Activated naive CD4-positive, alpha-beta T cell treated with anti-CD3 and anti-CD28 coated beads for 36 hours (primary cell): ENCODE measurements at regions of chr16 and their contacts with region 1.

Region 1: GRCh38 chr16:30657866-30658730 is at the start of gene FBRS:
- DNase-seq: peak; percentile 100
- H3K4me3 Mint-ChIP-seq: peak within 1 kb of the TSS; percentile 99
- H3K27ac Mint-ChIP-seq: peak within 1 kb of the TSS; percentile 100
- H3K4me1 Mint-ChIP-seq: peaks cover 42% of the 10 kb centered on the region
- H3K27me3 Mint-ChIP-seq: no peaks in the 10 kb centered on the region
- total RNA-seq, gene FBRS: 83.8 to 84.8 TPM

Region 2: GRCh38 chr16:30065143-30065850 is 592.8 kb before region 1 on chr16 and contains the start of gene ALDOA:
- CTCF ChIA-PET with region 1: no interaction called
- intact Hi-C with region 1: loop called (anchors 1 kb)
- DNase-seq: peak; percentile 97
- H3K4me3 Mint-ChIP-seq: peak within 1 kb of the TSS; percentile 95
- H3K27ac Mint-ChIP-seq: peak within 1 kb of the TSS; percentile 98
- H3K4me1 Mint-ChIP-seq: peaks cover 32% of the 10 kb centered on the region
- H3K27me3 Mint-ChIP-seq: no peaks in the 10 kb centered on the region
- total RNA-seq, gene ALDOA: 1,750 to 1,795 TPM

Region 3: GRCh38 chr16:30429678-30430427 is 228.2 kb before region 1 on chr16 and contains the start of gene DCTPP1:
- CTCF ChIA-PET with region 1: no interaction called
- intact Hi-C with region 1: loop called (anchors 1 kb)
- DNase-seq: peak; percentile 98
- H3K4me3 Mint-ChIP-seq: no peak within 1 kb of the TSS
- H3K27ac Mint-ChIP-seq: no peak within 1 kb of the TSS
- H3K4me1 Mint-ChIP-seq: peaks cover 39% of the 10 kb centered on the region
- H3K27me3 Mint-ChIP-seq: no peaks in the 10 kb centered on the region
- total RNA-seq, gene DCTPP1: 69.9 to 73.0 TPM

Region 4: DNA sequence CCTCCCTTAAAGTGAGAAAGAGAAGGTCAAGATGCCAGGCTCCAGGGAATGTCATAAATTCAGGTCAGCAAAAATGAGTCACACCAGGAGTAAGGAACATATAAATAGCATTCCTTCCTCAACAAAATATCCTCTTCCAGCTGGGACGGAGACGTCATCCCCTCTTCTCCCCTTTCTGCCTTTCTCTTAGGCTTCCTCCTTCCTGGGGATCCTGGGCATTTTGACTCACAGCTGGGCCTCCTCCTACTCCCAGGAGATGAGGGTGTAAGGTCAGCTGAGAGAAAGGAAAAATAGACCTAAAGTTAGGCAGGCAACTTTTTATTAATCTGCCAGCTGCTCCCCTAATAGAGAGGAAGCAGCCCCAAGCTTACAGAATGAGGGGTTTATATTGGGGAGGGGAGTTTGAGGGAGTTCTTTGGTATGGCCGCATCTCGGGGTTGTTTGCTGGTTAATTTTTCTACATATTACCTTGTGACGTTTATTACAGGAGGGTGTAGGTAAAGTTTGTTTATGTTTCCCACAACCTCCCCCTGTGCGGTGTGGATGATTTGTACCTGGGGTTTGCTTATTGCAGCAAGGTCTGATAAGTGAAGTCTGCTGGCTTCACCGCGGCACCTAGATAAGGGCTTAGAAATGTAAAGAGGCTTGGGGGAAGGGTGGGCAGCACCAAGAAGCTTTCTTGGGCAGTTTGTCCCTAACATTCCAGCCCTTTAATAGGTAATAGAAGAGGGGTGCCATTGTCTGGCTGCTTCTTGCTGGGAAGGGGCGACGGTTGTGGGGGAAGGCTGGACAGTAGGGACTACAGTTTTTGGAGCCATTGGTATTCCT is 116.4 kb before region 1 on chr16:
- CTCF ChIA-PET with region 1: no interaction called
- intact Hi-C with region 1: no loop called
- DNase-seq: no peak
- H3K4me3 Mint-ChIP-seq: no peak overlapping the region
- H3K27ac Mint-ChIP-seq: no peak overlapping the region
- H3K4me1 Mint-ChIP-seq: peaks cover 20% of the 10 kb centered on the region
- H3K27me3 Mint-ChIP-seq: no peaks in the 10 kb centered on the region

Region 5: GRCh38 chr16:30609926-30610839 is 47.9 kb before region 1 on chr16 and contains the start of gene ZNF689:
- CTCF ChIA-PET with region 1: interaction called, 3 read pairs
- intact Hi-C with region 1: loop called (anchors 1 kb)
- DNase-seq: peak; percentile 98
- H3K4me3 Mint-ChIP-seq: peak within 1 kb of the TSS; percentile 83
- H3K27ac Mint-ChIP-seq: peak within 1 kb of the TSS; percentile 96
- H3K4me1 Mint-ChIP-seq: peaks cover 20% of the 10 kb centered on the region
- H3K27me3 Mint-ChIP-seq: no peaks in the 10 kb centered on the region
- total RNA-seq, gene ZNF689: 10.7 to 11.5 TPM

Region 6: DNA sequence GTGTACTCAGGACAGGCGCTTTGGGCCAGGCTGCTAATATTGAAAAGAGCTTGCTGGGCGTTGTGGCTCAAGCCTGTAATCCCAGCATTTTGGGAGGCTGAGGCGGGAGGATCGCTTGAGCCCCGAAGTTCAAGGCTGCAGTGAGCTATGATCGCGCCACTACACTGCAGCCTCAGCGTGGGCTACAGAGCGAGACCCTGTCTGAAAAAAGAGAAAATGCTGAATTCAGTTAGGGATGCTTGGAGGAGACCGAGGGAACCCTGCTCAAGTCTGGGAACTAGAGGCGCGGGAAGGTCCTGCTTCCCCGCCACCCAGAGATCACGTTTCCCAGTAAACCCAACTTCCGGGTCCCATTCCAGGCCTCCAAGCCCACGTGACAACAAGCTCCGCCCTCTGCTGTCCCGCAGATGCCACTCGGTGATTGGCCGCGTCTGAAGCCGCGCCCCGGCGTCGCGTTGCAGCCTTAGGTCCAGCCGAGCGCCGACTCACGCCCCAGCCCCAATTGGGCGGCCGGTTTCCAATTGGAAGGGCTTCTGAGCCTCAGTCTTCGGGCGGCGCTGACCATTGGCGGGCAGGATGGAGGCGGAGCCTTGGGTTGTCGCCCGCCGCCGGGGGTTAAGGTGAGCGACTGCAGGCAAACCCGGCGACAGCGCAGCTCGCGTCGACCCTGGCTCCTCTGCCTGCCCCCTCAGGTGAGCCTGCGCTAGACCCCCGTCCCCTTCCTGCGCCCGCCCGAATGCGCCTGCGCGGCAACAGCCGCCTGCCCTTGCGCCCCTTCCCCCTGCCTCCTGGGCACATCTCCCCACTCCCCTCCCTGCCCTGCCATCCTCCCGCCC is 89.9 kb after region 1 on chr16 and contains the start of gene PHKG2:
- CTCF ChIA-PET with region 1: interaction called, 3 read pairs
- intact Hi-C with region 1: loop called (anchors 2 kb)
- DNase-seq: peak; percentile 99
- H3K4me3 Mint-ChIP-seq: peak within 1 kb of the TSS; percentile 89
- H3K27ac Mint-ChIP-seq: peak within 1 kb of the TSS; percentile 86
- H3K4me1 Mint-ChIP-seq: peaks cover 19% of the 10 kb centered on the region
- H3K27me3 Mint-ChIP-seq: no peaks in the 10 kb centered on the region
- total RNA-seq, gene PHKG2: 23.3 to 26.4 TPM

Region 7: GRCh38 chr16:31032736-31033708 is 374.9 kb after region 1 on chr16 and contains the start of gene STX4:
- CTCF ChIA-PET with region 1: no interaction called
- intact Hi-C with region 1: loop called (anchors 1 kb)
- DNase-seq: peak; percentile 99
- H3K4me3 Mint-ChIP-seq: peak within 1 kb of the TSS; percentile 96
- H3K27ac Mint-ChIP-seq: peak within 1 kb of the TSS; percentile 93
- H3K4me1 Mint-ChIP-seq: peaks cover 22% of the 10 kb centered on the region
- H3K27me3 Mint-ChIP-seq: no peaks in the 10 kb centered on the region
- total RNA-seq, gene STX4: 32.9 to 38.0 TPM